ENCODE measurements at regions of chr21 and their contacts with region 1.

Region 1: GRCh38 chr21:31558962-31559367 is 100.5 kb upstream of the SOD1 start:
- DNase-seq: peak; percentile 96

Region 2: DNA sequence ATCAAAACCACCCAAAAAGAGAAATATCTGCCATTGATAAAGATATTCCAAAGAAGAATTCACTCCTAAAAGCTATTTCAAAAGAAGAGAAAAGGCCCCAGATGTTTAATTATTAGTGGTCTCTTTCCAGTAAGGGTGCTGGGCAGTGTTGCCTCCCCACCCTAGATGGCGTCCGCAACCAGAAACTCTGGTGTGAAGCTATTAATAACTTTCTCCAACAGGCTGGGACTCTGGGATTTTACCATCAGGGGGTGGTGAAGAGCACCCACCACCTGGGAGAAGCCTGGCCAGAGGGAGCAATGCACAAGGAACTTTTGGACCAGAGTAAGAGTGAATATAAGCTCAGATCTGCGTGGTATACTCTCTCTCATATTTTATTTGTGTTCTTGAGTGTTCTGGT is 99.5 kb before region 1 on chr21:
- CTCF ChIA-PET with region 1: interaction called, 4 read pairs
- POLR2A ChIA-PET with region 1: interaction called, 14 read pairs
- DNase-seq: peak; percentile 48

Region 3: GRCh38 chr21:31530897-31531705 is 27.9 kb before region 1 on chr21:
- CTCF ChIA-PET with region 1: interaction called, 4 read pairs
- POLR2A ChIA-PET with region 1: interaction called, 12 read pairs
- DNase-seq: no peak

Region 4: DNA sequence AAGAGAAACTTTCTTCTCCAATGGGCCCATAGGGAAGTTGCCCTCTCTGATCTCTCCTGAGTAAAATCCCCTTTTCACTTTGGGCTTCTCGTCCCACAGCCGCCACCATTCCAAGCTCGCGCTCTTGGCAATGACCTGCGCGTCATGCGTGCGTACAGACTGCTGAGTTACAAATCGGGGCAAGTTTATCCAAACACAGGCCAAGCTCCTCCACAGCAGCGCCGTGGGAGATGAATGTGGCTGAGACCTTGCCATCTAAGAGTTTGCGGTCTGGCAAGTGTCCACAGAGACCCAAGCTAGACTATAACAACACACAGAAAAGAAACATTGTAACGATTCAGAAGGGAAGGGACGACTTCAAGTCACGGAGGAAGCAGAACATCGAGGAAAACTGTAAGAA is 15.8 kb before region 1 on chr21:
- CTCF ChIA-PET with region 1: interaction called, 6 read pairs
- POLR2A ChIA-PET with region 1: interaction called, 45 read pairs
- DNase-seq: no peak

Region 5: DNA sequence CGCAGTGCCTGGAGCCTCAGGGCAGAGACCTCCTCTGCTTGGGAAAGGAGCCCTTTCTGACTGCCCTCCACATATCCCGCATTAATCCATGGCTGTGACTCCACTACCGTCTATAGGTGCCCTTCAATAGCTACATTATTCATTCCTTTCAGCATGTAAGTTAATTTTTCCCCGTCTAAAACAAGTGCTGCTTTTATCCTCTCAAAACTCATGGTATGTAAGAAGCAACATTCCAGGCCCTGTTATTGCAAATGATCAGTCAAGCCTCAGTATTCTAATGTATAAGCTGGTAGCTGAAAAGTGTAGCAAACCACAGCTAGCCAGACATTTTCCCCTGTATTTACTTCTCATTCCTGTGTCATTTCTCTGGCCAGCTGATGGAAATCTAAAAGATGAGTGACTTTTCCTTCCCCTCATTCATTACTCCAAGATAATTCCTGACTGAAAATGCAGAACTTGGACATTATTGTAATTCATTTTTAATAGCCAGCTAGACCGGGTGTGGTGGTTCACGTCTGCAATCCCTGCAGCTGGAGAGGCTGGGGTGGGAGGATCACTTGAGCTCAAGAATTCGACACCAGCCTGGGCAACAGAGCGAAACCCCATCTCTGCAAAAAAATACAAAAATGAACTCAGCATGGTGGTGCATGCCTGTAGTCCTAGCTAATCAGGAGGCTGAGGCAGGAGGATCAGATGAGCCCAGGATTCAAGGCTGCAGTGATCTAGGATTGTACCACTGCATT is 12.0 kb after region 1 on chr21:
- CTCF ChIA-PET with region 1: interaction called, 7 read pairs
- POLR2A ChIA-PET with region 1: interaction called, 18 read pairs
- DNase-seq: no peak

Region 6: GRCh38 chr21:31597683-31598082 is 38.7 kb after region 1 on chr21:
- CTCF ChIA-PET with region 1: no interaction called
- POLR2A ChIA-PET with region 1: interaction called, 10 read pairs
- DNase-seq: peak; percentile 68

Region 7: GRCh38 chr21:31781737-31782136 is 222.8 kb after region 1 on chr21:
- CTCF ChIA-PET with region 1: no interaction called
- POLR2A ChIA-PET with region 1: no interaction called
- DNase-seq: peak; percentile 62